Endothelial cell of umbilical vein (primary cell): ENCODE measurements at regions of chr1 and their contacts with region 1.

Region 1: DNA sequence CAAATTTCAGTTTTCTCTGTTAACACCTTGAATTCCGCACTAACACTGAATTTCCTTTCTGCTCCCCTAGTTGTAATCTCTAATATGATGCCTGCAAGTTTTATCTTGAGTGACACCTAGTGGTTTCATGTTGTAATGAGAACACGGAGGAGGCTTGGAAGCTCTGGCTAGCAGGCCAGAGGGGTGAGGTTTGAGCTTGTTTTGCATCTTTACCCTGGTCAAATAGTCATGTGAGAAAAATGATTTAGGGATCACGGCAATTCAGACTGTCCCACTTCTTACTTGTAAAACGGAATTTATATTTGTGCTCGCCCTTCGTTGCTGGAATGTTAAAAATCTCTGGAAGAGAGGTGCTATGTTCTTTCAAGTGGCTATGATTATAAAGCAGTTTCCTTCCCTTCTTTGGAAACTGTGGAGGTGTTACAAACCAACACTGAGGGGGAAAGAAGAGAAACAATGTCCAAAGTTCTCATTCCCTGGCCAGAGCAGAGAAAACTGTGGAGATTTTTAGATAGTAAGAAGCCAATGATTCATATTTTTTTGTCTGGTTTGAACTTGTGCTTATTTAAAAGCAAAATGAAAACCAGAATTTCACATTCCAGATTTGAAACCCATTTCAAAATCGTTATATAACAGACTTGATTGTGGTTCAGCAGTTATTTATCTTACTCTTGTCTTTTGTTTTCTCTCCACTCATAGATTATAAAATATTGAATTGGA is 5.3 kb upstream of the MROH9 start:
- DNase-seq: peak; percentile 56
- H3K4me3 ChIP-seq: no peak overlapping the region
- H3K27ac ChIP-seq: no peak overlapping the region
- H3K4me1 ChIP-seq: no peaks in the 10 kb centered on the region
- H3K27me3 ChIP-seq: no peaks in the 10 kb centered on the region
- CTCF ChIP-seq: peak; percentile 56 to 59
- POLR2A ChIP-seq: no peak

Region 2: GRCh38 chr1:170010443-170010842 is 919.6 kb before region 1 on chr1:
- CTCF ChIA-PET with region 1: interaction called, 8 read pairs
- POLR2A ChIA-PET with region 1: no interaction called
- dilution Hi-C with region 1: no loop called
- intact Hi-C with region 1: loop called (anchors 1 kb)
- DNase-seq: peak; percentile 48
- H3K4me3 ChIP-seq: no peak overlapping the region
- H3K27ac ChIP-seq: no peak overlapping the region
- H3K4me1 ChIP-seq: no peaks in the 10 kb centered on the region
- H3K27me3 ChIP-seq: no peaks in the 10 kb centered on the region
- CTCF ChIP-seq: no peak
- POLR2A ChIP-seq: no peak

Region 3: GRCh38 chr1:170436928-170437327 is 493.1 kb before region 1 on chr1:
- CTCF ChIA-PET with region 1: interaction called, 5 read pairs
- POLR2A ChIA-PET with region 1: no interaction called
- dilution Hi-C with region 1: no loop called
- intact Hi-C with region 1: loop called (anchors 1 kb)
- DNase-seq: peak; percentile 28
- H3K4me3 ChIP-seq: no peak overlapping the region
- H3K27ac ChIP-seq: no peak overlapping the region
- H3K4me1 ChIP-seq: no peaks in the 10 kb centered on the region
- H3K27me3 ChIP-seq: no peaks in the 10 kb centered on the region
- CTCF ChIP-seq: peak in 1 of 2 donors; percentile 27
- POLR2A ChIP-seq: no peak

Region 4: DNA sequence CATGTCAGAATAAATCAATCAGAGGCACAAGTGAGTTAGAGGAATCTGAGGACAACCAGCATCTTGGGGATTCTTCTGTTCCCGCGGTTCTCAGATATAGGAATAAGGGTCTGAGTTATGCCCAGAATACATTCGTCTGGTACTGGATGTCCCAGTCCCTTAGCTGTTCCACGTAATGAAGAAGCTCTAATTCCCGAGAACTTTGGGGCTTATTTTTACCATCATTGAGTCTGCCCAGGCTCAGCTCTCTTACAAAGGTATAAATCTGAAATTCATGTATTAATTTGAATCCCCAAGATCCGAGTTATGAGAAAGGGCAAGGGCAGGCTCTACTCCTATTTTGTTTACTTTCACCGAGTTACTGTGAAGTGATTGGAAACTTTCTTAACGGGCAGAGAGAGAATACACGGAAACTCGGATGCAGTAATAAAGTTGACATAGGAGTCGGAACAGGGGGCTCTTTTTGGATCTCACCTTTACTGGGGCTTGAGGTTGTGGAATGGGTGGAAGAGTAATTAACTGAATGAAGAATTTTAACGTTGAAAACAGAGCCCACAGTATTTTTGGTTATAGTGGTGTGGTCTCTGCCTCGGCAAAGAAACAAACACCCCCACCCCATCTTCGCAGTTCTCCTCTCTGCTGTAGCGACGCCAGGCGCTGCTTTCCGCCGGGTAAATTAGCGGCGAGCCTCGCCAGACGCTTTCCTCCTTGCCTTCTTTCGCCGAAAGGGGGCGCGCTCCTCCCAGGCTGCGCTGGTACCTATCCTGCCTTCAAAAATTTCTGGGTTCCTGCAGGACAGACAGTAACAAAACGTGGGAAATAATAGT is 259.0 kb before region 1 on chr1:
- CTCF ChIA-PET with region 1: interaction called, 5 read pairs
- POLR2A ChIA-PET with region 1: no interaction called
- dilution Hi-C with region 1: no loop called
- intact Hi-C with region 1: loop called (anchors 1 kb)
- DNase-seq: peak; percentile 43
- H3K4me3 ChIP-seq: no peak overlapping the region
- H3K27ac ChIP-seq: no peak overlapping the region
- H3K4me1 ChIP-seq: no peaks in the 10 kb centered on the region
- H3K27me3 ChIP-seq: peaks cover 22 to 27% of the 10 kb centered on the region in 2 experiments
- CTCF ChIP-seq: peak; percentile 86 to 89
- POLR2A ChIP-seq: no peak

Region 5: DNA sequence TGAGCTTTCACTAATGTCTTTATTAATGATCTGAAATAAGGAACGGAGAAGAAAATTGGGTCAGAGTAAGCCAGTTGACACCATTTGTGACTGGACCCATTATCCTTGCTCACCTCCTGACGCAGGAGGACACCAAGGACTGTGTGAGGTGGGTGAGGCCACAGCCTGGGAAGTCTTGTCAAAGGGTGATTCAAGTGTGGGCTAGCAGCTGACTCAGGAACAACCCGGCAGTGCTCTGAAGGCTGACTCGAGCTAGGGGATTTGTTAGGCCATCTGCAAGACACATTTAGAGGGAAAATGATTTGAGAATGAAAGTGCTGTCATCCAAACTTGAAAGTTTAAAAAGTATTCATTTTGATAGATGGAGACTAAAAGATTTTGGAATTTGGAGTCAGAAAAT is 244.8 kb before region 1 on chr1:
- CTCF ChIA-PET with region 1: interaction called, 124 read pairs
- POLR2A ChIA-PET with region 1: no interaction called
- dilution Hi-C with region 1: no loop called
- intact Hi-C with region 1: loop called (anchors 1 kb)
- DNase-seq: no peak
- H3K4me3 ChIP-seq: no peak overlapping the region
- H3K27ac ChIP-seq: no peak overlapping the region
- H3K4me1 ChIP-seq: peaks cover 7% of the 10 kb centered on the region
- H3K27me3 ChIP-seq: no peaks in the 10 kb centered on the region
- CTCF ChIP-seq: no peak
- POLR2A ChIP-seq: no peak

Region 6: DNA sequence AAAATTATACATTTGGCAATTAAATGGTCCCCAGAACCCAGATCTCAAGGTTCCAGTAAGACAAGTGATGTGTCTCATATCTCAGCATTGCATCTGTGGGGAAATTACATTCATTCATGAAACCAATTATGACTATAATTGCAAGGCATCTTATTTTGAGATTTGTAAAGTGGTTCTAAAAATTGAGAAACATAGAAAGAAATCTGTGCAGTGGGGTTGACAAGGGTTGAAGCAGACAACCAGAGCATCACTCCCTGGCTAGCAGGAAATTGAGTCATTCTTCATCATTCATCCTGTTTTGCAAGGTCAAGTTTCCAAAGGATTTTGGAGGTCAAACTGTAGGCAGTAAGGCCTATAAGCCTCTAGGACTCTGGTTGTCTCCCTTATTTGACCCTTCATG is 19.7 kb before region 1 on chr1:
- CTCF ChIA-PET with region 1: interaction called, 20 read pairs
- POLR2A ChIA-PET with region 1: no interaction called
- dilution Hi-C with region 1: no loop called
- intact Hi-C with region 1: no loop called
- DNase-seq: peak; percentile 39
- H3K4me3 ChIP-seq: no peak overlapping the region
- H3K27ac ChIP-seq: no peak overlapping the region
- H3K4me1 ChIP-seq: peaks cover 13% of the 10 kb centered on the region
- H3K27me3 ChIP-seq: no peaks in the 10 kb centered on the region
- CTCF ChIP-seq: no peak
- POLR2A ChIP-seq: no peak

Region 7: GRCh38 chr1:172870901-172871606 is 1941.1 kb after region 1 on chr1:
- CTCF ChIA-PET with region 1: no interaction called
- POLR2A ChIA-PET with region 1: no interaction called
- dilution Hi-C with region 1: no loop called
- intact Hi-C with region 1: no loop called
- DNase-seq: no peak
- H3K4me3 ChIP-seq: no peak overlapping the region
- H3K27ac ChIP-seq: no peak overlapping the region
- H3K4me1 ChIP-seq: peaks cover 10% of the 10 kb centered on the region
- H3K27me3 ChIP-seq: no peaks in the 10 kb centered on the region
- CTCF ChIP-seq: no peak
- POLR2A ChIP-seq: no peak